CD14-positive monocyte (primary cell): ENCODE measurements at regions of chr17 and their contacts with region 1.

Region 1: GRCh38 chr17:4004517-4005295 is 40.5 kb upstream of the ATP2A3 start:
- DNase-seq: peak; percentile 43 to 66 (median 63)
- H3K4me3 ChIP-seq: no peak overlapping the region
- H3K4me3 Mint-ChIP-seq: peak overlapping the region in 1 of 2 donors; percentile 75
- H3K27ac ChIP-seq: no peak overlapping the region
- H3K27ac Mint-ChIP-seq: peak overlapping the region in 5 of 7 donors; percentile 61 to 79 (median 70)
- H3K4me1 ChIP-seq: peaks cover 18 to 32% of the 10 kb centered on the region in 2 donors
- H3K4me1 Mint-ChIP-seq: peaks cover 26% of the 10 kb centered on the region
- H3K27me3 ChIP-seq: peaks cover 0 to 4% of the 10 kb centered on the region in 2 donors
- H3K27me3 Mint-ChIP-seq: peaks cover 1 to 19% (median 3%) of the 10 kb centered on the region in 3 donors
- CTCF ChIP-seq: peak; percentile 99

Region 2: DNA sequence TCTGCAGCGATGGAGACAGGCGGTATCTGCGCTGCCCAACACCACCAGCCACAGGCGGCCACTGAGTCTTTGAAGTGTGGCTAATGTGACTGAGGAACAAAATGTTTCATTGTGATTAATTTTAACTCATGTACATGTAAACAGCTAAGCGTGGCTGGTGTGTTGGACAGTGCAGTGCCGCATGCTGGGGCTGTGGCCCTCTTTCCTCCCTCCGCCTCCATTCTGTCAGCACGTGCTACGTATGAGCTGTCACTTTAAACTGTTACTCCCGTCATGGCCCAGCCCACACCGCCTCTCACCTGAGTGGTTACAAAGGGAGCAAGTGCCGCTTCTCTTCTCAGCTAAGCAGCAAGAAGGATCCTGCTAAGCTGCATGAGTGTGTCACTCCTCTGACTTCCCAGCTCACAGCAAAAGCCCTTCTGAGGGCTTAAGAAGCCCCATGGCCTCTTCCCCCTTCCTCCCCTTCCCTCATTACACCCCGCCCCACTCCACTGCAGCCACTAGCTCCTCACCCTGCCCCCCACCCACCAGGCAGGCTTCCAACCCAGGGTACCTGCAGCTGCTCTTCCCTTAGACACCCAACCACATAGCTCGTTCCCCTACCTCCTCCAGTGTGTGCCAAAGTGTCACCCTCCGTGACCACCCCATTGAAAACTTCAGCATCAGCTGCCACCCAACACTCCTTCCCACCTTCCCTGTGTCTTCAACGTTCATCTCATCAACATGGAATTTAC is 266.0 kb before region 1 on chr17:
- intact Hi-C with region 1: loop called in 1 of 2 experiments (anchors 10 kb)
- DNase-seq: no peak
- H3K4me3 ChIP-seq: no peak overlapping the region
- H3K4me3 Mint-ChIP-seq: no peak overlapping the region
- H3K27ac ChIP-seq: no peak overlapping the region
- H3K27ac Mint-ChIP-seq: peak overlapping the region in 2 of 7 donors; percentile 16
- H3K4me1 ChIP-seq: peaks cover 18 to 22% of the 10 kb centered on the region in 2 donors
- H3K4me1 Mint-ChIP-seq: peaks cover 23% of the 10 kb centered on the region
- H3K27me3 ChIP-seq: no peaks in the 10 kb centered on the region
- H3K27me3 Mint-ChIP-seq: peaks cover 0 to 6% (median 3%) of the 10 kb centered on the region in 3 donors
- CTCF ChIP-seq: no peak

Region 3: GRCh38 chr17:3859940-3860339 is 144.8 kb before region 1 on chr17:
- intact Hi-C with region 1: loop called (anchors 2 to 5 kb)
- DNase-seq: no peak
- H3K4me3 ChIP-seq: no peak overlapping the region
- H3K4me3 Mint-ChIP-seq: no peak overlapping the region
- H3K27ac ChIP-seq: no peak overlapping the region
- H3K27ac Mint-ChIP-seq: peak overlapping the region in 1 of 7 donors; percentile 11
- H3K4me1 ChIP-seq: no peaks in the 10 kb centered on the region
- H3K4me1 Mint-ChIP-seq: no peaks in the 10 kb centered on the region
- H3K27me3 ChIP-seq: no peaks in the 10 kb centered on the region
- H3K27me3 Mint-ChIP-seq: peaks cover 0 to 3% (median 3%) of the 10 kb centered on the region in 3 donors
- CTCF ChIP-seq: no peak

Region 4: DNA sequence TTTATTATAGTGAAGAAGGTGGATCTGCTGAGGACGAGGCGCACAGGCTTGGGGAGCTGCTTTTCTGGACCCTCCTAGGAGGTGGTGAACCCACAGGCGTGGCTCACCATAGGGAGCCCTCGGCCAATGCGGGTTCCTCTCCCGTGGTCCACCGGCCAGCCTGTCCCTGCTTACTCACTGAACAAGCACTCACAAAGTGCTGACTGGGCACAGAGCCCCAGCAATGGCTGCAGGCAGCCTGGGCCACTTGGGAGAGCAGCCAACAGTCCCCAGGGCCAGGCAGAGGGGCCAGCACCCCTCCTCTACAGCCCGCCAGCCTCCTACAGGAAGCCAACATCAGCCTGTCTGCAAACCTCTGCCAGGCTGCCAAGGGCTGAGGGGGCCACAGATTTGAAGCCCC is 139.5 kb before region 1 on chr17:
- intact Hi-C with region 1: loop called (anchors 2 to 5 kb)
- DNase-seq: no peak
- H3K4me3 ChIP-seq: no peak overlapping the region
- H3K4me3 Mint-ChIP-seq: no peak overlapping the region
- H3K27ac ChIP-seq: no peak overlapping the region
- H3K27ac Mint-ChIP-seq: peak overlapping the region in 2 of 7 donors; percentile 25 to 65
- H3K4me1 ChIP-seq: no peaks in the 10 kb centered on the region
- H3K4me1 Mint-ChIP-seq: no peaks in the 10 kb centered on the region
- H3K27me3 ChIP-seq: no peaks in the 10 kb centered on the region
- H3K27me3 Mint-ChIP-seq: peaks cover 0 to 3% (median 0%) of the 10 kb centered on the region in 3 donors
- CTCF ChIP-seq: no peak

Region 5: DNA sequence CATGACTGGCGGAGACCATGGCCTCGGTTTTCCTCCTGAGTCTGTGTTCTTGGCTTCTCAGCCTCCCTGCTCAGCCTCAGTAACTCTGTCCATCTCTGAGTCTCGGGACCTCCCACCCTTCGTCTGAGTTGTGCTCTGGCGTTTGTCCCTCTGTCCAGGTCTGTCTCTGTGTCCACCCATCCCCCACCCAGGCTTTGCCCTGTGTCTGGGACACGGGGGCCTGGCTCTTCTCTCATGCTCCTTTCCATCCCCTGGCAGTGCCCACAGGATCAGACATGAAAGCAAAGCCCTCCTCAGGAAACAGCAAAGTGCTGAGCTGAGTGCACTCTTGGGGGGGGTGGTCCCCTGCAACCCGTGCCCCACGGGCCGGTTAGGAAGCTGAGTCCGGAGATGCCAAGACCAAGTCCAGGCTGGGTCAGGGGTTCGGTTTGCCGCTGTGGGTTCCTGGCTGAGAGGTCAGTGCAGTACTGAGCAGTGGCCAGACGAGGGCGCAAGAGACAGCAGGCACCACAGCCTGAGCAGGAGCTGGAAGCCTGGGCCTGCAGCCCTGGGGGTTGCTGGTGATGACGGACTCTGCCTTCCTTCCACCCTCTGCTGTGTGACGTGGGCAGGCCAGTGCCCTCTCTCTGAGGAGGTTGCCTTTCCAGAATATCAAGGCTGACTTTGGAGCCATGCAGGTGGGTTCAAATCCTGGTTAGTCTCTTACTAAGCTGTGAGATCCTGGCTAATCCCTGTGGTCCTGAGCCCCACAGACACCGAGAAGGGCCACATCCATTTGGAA is 91.0 kb before region 1 on chr17:
- intact Hi-C with region 1: loop called (anchors 1 to 5 kb)
- DNase-seq: peak; percentile 88 to 90 (median 89)
- H3K4me3 ChIP-seq: peak overlapping the region; percentile 75 to 92 (median 77)
- H3K4me3 Mint-ChIP-seq: peak overlapping the region; percentile 96 to 97
- H3K27ac ChIP-seq: peak overlapping the region; percentile 80 to 96
- H3K27ac Mint-ChIP-seq: peak overlapping the region; percentile 94 to 99 (median 98)
- H3K4me1 ChIP-seq: peaks cover 72 to 73% of the 10 kb centered on the region in 2 donors
- H3K4me1 Mint-ChIP-seq: peaks cover 72% of the 10 kb centered on the region
- H3K27me3 ChIP-seq: no peaks in the 10 kb centered on the region
- H3K27me3 Mint-ChIP-seq: peaks cover 0 to 3% (median 0%) of the 10 kb centered on the region in 3 donors
- CTCF ChIP-seq: peak; percentile 98

Region 6: DNA sequence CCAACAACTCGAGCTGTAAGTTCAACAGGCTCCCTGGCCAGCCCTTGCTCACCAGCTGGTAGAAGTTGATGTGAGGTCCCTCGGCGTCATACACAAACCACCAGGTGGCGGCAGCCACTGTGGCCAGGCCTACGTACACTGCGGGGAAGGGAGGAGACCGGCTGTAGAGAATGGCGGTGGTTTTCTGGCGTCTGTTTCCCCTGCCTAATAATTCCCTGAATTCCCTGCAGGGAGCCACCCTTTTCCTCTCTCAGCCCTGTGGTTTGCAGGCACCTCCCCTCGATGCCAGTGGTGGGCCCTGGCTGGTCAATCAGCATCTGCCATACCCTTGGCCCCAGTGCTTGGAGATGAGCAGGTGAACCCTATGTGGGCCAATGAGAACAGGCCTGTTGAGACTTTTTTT is 69.6 kb before region 1 on chr17:
- intact Hi-C with region 1: loop called in 1 of 2 experiments (anchors 2 kb)
- DNase-seq: peak; percentile 54 to 62 (median 58)
- H3K4me3 ChIP-seq: no peak overlapping the region
- H3K4me3 Mint-ChIP-seq: no peak overlapping the region
- H3K27ac ChIP-seq: peak overlapping the region in 1 of 2 donors; percentile 31
- H3K27ac Mint-ChIP-seq: peak overlapping the region in 4 of 7 donors; percentile 32 to 70 (median 51)
- H3K4me1 ChIP-seq: no peaks in the 10 kb centered on the region
- H3K4me1 Mint-ChIP-seq: no peaks in the 10 kb centered on the region
- H3K27me3 ChIP-seq: no peaks in the 10 kb centered on the region
- H3K27me3 Mint-ChIP-seq: no peaks in the 10 kb centered on the region
- CTCF ChIP-seq: peak; percentile 63

Region 7: GRCh38 chr17:3965118-3965803 is 39.4 kb before region 1 on chr17:
- intact Hi-C with region 1: loop called (anchors 2 to 5 kb)
- DNase-seq: peak; percentile 59 to 76 (median 68)
- H3K4me3 ChIP-seq: peak overlapping the region; percentile 56 to 86 (median 65)
- H3K4me3 Mint-ChIP-seq: peak overlapping the region; percentile 77 to 95
- H3K27ac ChIP-seq: peak overlapping the region; percentile 48 to 82
- H3K27ac Mint-ChIP-seq: peak overlapping the region; percentile 84 to 93 (median 91)
- H3K4me1 ChIP-seq: peaks cover 44 to 52% of the 10 kb centered on the region in 2 donors
- H3K4me1 Mint-ChIP-seq: peaks cover 42% of the 10 kb centered on the region
- H3K27me3 ChIP-seq: no peaks in the 10 kb centered on the region
- H3K27me3 Mint-ChIP-seq: peaks cover 2 to 8% (median 2%) of the 10 kb centered on the region in 3 donors
- CTCF ChIP-seq: no peak